ENCODE measurements at regions of chr11 and their contacts with region 1.

Region 1: GRCh38 chr11:13210424-13210823 is 67.2 kb upstream of the BMAL1 start:
- DNase-seq: peak; percentile 23 to 47
- ATAC-seq: peak; percentile 59 to 70
- H3K4me3 ChIP-seq: no peak overlapping the region
- H3K27ac ChIP-seq: no peak overlapping the region
- H3K4me1 ChIP-seq: no peaks in the 10 kb centered on the region
- H3K27me3 ChIP-seq: no peaks in the 10 kb centered on the region
- CTCF ChIP-seq: peak; percentile 28 to 65 (median 64)
- POLR2A ChIP-seq: no peak

Region 2: DNA sequence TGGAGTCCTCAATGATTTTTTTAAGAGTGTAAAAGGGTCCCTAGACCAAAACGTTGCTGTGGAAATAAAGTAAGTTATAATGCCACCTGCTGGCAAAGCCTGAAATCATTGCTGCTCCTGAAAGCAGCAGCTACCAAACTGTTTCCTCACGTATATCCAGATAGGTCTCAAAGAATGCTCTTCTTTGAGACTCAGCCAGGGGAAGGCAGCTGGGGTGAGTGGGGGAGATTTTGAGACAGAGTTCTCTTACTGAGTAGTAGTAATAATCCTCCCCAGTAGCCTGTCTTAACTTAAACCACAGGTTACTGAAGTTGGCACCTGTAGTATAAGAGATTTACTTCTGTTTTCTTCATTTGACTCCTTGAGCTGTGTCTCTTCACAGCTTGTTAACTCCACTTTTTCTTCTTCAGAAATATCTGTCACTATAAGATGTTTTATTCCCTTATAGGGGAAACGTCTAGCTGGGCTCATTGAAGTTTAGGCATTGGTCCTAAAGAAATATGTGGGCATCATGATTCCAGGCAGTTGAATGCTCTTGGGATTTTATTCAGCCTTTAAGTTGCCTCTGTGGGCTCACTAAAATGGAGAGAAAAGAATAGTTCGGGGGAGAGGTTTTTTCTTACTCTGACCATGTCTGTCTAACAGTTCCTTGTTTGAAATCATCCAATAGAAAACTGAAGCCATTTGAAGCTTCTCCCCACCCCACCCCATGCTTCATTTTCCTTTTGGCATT is 174.7 kb after region 1 on chr11:
- in situ Hi-C with region 1: no loop called
- intact Hi-C with region 1: loop called (anchors 1 kb)
- DNase-seq: no peak
- ATAC-seq: no peak
- H3K4me3 ChIP-seq: no peak overlapping the region
- H3K27ac ChIP-seq: no peak overlapping the region
- H3K4me1 ChIP-seq: no peaks in the 10 kb centered on the region
- H3K27me3 ChIP-seq: no peaks in the 10 kb centered on the region
- CTCF ChIP-seq: peak in 3 of 5 experiments; percentile 18 to 39 (median 39)
- POLR2A ChIP-seq: no peak

Region 3: DNA sequence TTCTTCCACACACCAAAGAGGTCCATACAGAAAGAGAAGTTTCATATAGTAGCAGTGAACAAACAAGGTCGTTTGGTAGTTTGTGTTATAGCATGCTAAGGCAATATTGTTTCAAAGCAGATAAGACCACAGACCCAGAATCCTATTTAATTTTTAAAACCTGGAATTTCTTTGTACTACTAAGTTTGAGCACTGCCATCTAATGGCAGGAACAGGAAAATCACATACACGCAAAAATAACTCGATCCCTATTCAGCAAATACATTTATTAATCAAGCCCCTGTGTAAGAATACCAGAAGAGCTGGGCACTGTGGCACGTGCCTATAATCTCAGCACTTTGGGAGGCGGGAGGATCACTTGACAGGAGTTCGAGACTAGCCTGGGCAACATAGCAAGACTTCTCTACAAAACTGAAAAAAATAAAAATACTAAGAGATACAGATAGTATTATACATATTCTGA is 255.5 kb after region 1 on chr11:
- in situ Hi-C with region 1: no loop called
- intact Hi-C with region 1: loop called (anchors 2 kb)
- DNase-seq: no peak
- ATAC-seq: no peak
- H3K4me3 ChIP-seq: no peak overlapping the region
- H3K27ac ChIP-seq: no peak overlapping the region
- H3K4me1 ChIP-seq: peaks cover 13% of the 10 kb centered on the region in 2 donors
- H3K27me3 ChIP-seq: peaks cover 0 to 5% (median 0%) of the 10 kb centered on the region in 3 donors
- CTCF ChIP-seq: peak in 3 of 5 experiments; percentile 10 to 60 (median 54)
- POLR2A ChIP-seq: no peak

Measured in gastrocnemius medialis (tissue), 4 donors.